ENCODE measurements at regions of chr2 and their contacts with region 1.

Region 1: GRCh38 chr2:143110758-143111428 is 18.3 kb upstream of the ARHGAP15 start:
- DNase-seq: peak; percentile 10
- CTCF ChIP-seq: peak; percentile 76

Region 2: GRCh38 chr2:142533177-142533576 is 577.7 kb before region 1 on chr2:
- in situ Hi-C with region 1: no loop called
- DNase-seq: no peak
- CTCF ChIP-seq: no peak

Region 3: DNA sequence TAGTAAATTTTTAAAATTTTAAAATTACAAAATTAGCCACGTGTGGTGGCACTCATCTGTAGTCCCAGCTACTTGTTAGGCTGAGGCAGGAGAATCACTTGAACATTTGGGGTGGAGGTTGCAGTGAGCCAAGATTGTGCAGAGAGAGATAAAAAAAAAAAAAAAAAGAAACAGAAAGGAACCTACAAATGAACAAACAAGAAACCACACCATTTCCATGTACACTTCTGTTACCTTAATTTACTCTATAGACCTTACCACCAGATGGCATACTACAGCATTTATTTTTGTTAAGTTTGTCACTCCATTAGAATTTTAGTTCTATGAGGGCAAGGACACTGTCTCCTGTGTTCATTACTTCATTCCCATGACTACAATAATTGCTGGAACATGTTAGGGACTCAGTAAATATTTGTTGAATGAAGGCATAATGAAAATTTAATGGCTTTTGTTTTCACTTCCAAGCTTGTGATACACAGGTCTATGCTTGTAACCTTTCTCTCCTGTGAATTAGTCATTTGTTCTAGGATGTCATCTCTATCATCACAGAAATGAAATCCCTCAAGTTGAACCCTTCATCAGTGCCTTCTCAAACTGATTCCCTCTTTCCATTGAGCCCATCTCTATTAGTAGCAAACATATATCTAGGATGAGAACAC is 94.3 kb after region 1 on chr2:
- in situ Hi-C with region 1: loop called (anchors 25 kb)
- DNase-seq: no peak
- CTCF ChIP-seq: peak; percentile 48